ENCODE measurements at regions of chr6 and their contacts with region 1.

Region 1: GRCh38 chr6:55886185-55886836 is 10.9 kb upstream of the BMP5 start:
- DNase-seq: no peak
- H3K4me3 Mint-ChIP-seq: no peak overlapping the region
- H3K27ac Mint-ChIP-seq: no peak overlapping the region
- H3K4me1 Mint-ChIP-seq: no peaks in the 10 kb centered on the region
- H3K27me3 Mint-ChIP-seq: no peaks in the 10 kb centered on the region

Region 2: GRCh38 chr6:55445648-55446204 is 440.6 kb before region 1 on chr6:
- CTCF ChIA-PET with region 1: no interaction called
- POLR2A ChIA-PET with region 1: no interaction called
- intact Hi-C with region 1: loop called (anchors 5 kb)
- DNase-seq: no peak
- H3K4me3 Mint-ChIP-seq: no peak overlapping the region
- H3K27ac Mint-ChIP-seq: no peak overlapping the region
- H3K4me1 Mint-ChIP-seq: no peaks in the 10 kb centered on the region
- H3K27me3 Mint-ChIP-seq: no peaks in the 10 kb centered on the region

Region 3: DNA sequence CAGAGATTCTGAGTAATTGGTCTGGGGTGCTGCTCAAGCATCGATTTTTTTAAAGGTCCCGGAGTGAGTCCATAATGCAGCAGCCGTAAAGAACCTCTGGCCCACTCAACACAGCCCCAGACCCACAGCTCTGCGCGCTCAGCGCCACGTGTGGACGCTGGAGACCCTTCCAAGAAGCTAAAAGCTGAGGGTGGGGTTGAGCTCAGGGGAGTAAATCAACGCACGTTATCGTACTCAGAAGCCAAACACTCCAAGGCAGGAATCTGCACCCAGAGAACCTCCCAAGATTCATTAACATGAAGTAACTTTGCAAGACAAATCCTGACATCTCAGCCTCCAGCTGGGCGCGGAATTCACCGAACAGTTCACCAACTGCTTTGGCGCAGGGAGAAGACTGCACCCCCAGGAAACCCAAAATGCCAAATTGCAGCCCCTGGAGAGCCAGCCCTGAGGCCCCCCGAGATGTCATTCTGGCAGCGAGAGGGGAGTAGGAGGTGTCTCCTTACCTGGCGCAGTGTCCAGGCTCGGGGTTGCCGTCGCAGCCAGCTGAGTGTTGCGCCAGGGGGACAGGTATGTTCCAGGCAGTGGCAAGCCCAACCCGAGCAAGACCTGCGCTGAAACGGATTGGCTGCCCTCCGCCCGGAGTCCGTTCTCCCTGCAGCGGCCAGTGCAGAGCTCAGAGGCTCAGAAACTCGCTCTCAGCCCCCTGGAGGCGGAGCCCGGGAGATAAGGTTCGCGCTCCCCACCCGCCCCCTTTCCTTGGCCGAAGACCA is 360.8 kb after region 1 on chr6 and contains the start of gene COL21A1:
- CTCF ChIA-PET with region 1: no interaction called
- POLR2A ChIA-PET with region 1: no interaction called
- intact Hi-C with region 1: no loop called
- DNase-seq: no peak
- H3K4me3 Mint-ChIP-seq: no peak within 1 kb of the TSS
- H3K27ac Mint-ChIP-seq: no peak within 1 kb of the TSS
- H3K4me1 Mint-ChIP-seq: no peaks in the 10 kb centered on the region
- H3K27me3 Mint-ChIP-seq: no peaks in the 10 kb centered on the region
- total RNA-seq, gene COL21A1: not detected